ENCODE measurements at regions of chr18 and their contacts with region 1.

Region 1: GRCh38 chr18:23586249-23587196 is at the start of gene NPC1:
- DNase-seq: peak; percentile 67
- ATAC-seq: peak; percentile 95
- H3K4me3 ChIP-seq: peak within 1 kb of the TSS; percentile 91
- H3K27ac ChIP-seq: peak within 1 kb of the TSS; percentile 96
- H3K4me1 ChIP-seq: peaks cover 7% of the 10 kb centered on the region; the same call in 1 of the 2 replicates
- H3K27me3 ChIP-seq: no peaks in the 10 kb centered on the region
- CTCF ChIP-seq: peak; percentile 81 to 88 (median 85)
- EP300 ChIP-seq: no peak
- POLR2A ChIP-seq: peak; percentile 93
- RAD21 ChIP-seq: peak; percentile 65
- polyA plus RNA-seq, gene NPC1: 10.1 to 11.0 TPM

Region 2: GRCh38 chr18:23460285-23461273 is 125.9 kb before region 1 on chr18:
- CTCF ChIA-PET with region 1: no interaction called
- POLR2A ChIA-PET with region 1: no interaction called
- RAD21 ChIA-PET with region 1: no interaction called
- SMC1A ChIA-PET with region 1: no interaction called
- in situ Hi-C with region 1: no loop called
- intact Hi-C with region 1: no loop called
- DNase-seq: no peak
- ATAC-seq: peak; percentile 7; the same call in 2 of the 3 replicates
- H3K4me3 ChIP-seq: peak overlapping the region; percentile 16; the same call in 1 of the 2 replicates
- H3K27ac ChIP-seq: no peak overlapping the region
- H3K4me1 ChIP-seq: no peaks in the 10 kb centered on the region
- H3K27me3 ChIP-seq: no peaks in the 10 kb centered on the region
- CTCF ChIP-seq: no peak
- EP300 ChIP-seq: no peak
- POLR2A ChIP-seq: no peak
- RAD21 ChIP-seq: no peak

Region 3: GRCh38 chr18:23540867-23541266 is 45.7 kb before region 1 on chr18:
- CTCF ChIA-PET with region 1: interaction called, 7 read pairs
- POLR2A ChIA-PET with region 1: no interaction called
- RAD21 ChIA-PET with region 1: no interaction called
- SMC1A ChIA-PET with region 1: interaction called, 11 read pairs
- in situ Hi-C with region 1: no loop called
- intact Hi-C with region 1: loop called (anchors 5 kb)
- DNase-seq: peak; percentile 43
- ATAC-seq: peak; percentile 83
- H3K4me3 ChIP-seq: no peak overlapping the region
- H3K27ac ChIP-seq: peak overlapping the region; percentile 47
- H3K4me1 ChIP-seq: peaks cover 31% of the 10 kb centered on the region
- H3K27me3 ChIP-seq: no peaks in the 10 kb centered on the region
- CTCF ChIP-seq: no peak
- EP300 ChIP-seq: peak in 1 of 2 experiments; percentile 48; a peak in 1 of 4 replicates
- POLR2A ChIP-seq: no peak
- RAD21 ChIP-seq: no peak

Region 4: DNA sequence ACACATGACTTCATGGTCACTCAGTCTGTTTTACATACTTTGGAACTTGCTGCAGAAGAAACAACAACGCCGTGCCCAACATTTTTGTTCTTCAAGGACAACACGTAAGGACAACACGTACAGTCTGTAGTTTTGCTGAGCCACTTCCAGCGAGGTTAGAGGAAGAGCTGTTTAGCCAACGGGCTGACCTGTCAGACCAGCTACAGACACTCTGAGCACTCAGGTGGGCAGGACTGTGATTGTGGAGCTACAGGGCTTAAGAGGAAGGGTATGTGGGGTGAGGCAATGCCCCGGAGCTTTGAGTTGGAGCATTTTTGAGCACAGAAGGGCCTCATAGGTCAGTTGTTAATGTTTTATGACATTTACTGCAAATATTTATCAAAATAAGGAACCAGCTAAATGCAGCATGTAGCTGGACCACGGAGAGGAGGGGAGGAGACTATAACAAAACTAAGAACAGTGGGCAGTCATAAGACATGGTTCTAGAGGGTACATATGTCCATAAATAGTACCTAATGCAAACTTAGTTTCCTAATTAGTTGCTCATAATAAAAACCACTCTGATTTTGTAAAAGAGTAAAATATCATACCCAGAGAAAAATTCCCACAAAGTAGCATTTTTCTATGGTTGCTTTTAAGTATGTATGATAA is 26.0 kb after region 1 on chr18:
- CTCF ChIA-PET with region 1: interaction called, 18 read pairs
- POLR2A ChIA-PET with region 1: interaction called, 33 read pairs
- RAD21 ChIA-PET with region 1: interaction called, 22 read pairs
- SMC1A ChIA-PET with region 1: interaction called, 28 read pairs
- in situ Hi-C with region 1: no loop called
- intact Hi-C with region 1: no loop called
- DNase-seq: peak; percentile 38
- ATAC-seq: peak; percentile 57
- H3K4me3 ChIP-seq: no peak overlapping the region
- H3K27ac ChIP-seq: no peak overlapping the region
- H3K4me1 ChIP-seq: peaks cover 5% of the 10 kb centered on the region
- H3K27me3 ChIP-seq: no peaks in the 10 kb centered on the region
- CTCF ChIP-seq: no peak
- EP300 ChIP-seq: no peak
- POLR2A ChIP-seq: no peak
- RAD21 ChIP-seq: no peak

Region 5: GRCh38 chr18:23703057-23703986 is 116.8 kb after region 1 on chr18:
- CTCF ChIA-PET with region 1: interaction called, 16 read pairs
- POLR2A ChIA-PET with region 1: no interaction called
- RAD21 ChIA-PET with region 1: interaction called, 7 read pairs
- SMC1A ChIA-PET with region 1: interaction called, 10 read pairs
- in situ Hi-C with region 1: no loop called
- intact Hi-C with region 1: no loop called
- DNase-seq: no peak
- ATAC-seq: peak; percentile 92
- H3K4me3 ChIP-seq: no peak overlapping the region
- H3K27ac ChIP-seq: no peak overlapping the region
- H3K4me1 ChIP-seq: no peaks in the 10 kb centered on the region
- H3K27me3 ChIP-seq: no peaks in the 10 kb centered on the region
- CTCF ChIP-seq: peak; percentile 35 to 79 (median 41); a peak in 5 of 6 replicates
- EP300 ChIP-seq: no peak
- POLR2A ChIP-seq: no peak
- RAD21 ChIP-seq: peak; percentile 95

Measured in GM12878 (cell line).